ENCODE measurements at regions of chr13 and their contacts with region 1.

Region 1: GRCh38 chr13:32586080-32586900 is at the start of gene PDS5B:
- DNase-seq: peak; percentile 98
- ATAC-seq: peak; percentile 99
- total RNA-seq, gene PDS5B: 25.1 TPM

Region 2: DNA sequence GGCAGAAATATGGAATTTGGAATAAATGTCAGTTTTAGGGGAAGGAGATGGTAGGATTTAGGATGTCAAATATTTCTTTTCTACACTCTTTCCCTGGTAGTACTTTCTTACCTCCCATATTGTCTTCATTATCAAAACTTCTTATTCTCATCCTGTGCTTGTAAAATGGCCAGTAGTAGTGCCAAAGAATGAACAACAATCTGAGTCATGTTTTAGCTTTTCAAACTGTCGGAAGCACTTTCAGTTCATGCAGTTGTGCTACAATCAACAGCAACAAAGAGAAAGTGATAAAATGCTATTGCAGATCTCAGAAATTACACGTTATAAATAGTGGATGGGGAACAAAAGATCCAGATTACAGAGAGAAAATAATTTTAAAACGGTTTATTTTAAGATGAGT is 1040.7 kb before region 1 on chr13:
- intact Hi-C with region 1: no loop called
- DNase-seq: no peak
- ATAC-seq: no peak

Region 3: GRCh38 chr13:32538621-32539246 is 47.6 kb before region 1 on chr13 and contains the start of gene N4BP2L2:
- intact Hi-C with region 1: loop called (anchors 5 kb)
- DNase-seq: peak; percentile 95
- ATAC-seq: peak; percentile 99
- total RNA-seq, gene N4BP2L2: 115 TPM

Region 4: DNA sequence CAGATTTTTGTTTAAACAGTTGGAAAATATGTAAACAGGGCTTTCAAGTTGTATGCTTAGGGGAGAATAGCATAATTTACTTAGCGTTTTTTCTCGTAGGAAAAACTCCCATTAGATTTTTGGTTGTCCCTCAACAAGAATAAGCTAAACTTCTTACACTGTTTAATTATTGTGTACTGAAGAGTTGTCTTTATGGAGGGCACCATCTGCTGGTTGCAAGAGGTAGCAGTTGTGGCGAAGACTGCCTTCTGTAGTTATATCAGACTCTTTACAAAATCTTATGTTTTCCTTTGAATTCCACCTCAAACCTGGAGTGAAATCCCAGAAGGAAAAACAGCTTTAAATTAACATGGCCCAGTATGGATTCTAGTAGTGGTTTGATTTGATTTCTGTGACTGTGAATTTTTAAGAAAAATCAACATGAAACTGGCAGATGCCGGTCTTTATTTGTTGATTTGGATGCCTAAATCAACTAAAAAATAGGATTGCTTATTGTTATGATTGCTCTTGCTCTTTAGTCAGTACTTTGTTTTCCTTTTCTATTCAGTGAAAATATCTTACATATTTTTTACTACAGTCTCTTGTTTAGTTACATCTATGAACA is 53.3 kb after region 1 on chr13:
- intact Hi-C with region 1: loop called (anchors 1 kb)
- DNase-seq: no peak
- ATAC-seq: peak; percentile 57

Region 5: GRCh38 chr13:32902874-32903273 is 316.6 kb after region 1 on chr13:
- intact Hi-C with region 1: loop called (anchors 5 kb)
- DNase-seq: peak; percentile 88
- ATAC-seq: peak; percentile 94

Region 6: DNA sequence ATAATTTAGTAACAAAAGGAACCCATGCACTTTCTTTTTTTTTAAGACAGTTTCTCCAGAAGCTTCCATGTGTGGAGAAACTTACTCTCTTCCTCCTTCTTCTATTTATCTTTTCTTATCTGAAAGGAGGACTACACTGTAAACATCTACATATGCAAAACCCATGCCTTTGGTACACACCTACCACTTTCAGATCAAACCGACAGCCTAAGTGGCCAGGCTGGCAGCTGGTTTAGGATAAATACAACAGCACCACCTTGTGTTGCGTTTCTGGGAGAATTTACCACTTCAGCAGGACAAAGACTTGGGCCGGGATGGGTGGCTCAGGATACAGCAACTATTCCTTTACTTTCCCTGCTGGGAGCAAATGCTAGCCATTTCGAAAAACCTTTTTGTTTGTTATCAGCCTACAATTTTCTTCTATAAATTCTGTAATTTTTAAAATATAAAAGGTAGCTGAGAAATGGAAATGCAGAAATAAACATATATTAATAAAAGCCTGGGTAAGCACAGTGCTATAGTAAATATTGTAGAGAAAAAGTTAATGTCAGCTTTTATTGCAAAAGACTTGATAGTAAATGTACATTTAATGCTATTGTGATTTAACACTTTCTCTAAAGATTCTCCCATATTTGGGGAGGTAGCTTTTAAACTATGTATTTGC is 1137.6 kb after region 1 on chr13:
- intact Hi-C with region 1: loop called (anchors 2 kb)
- DNase-seq: peak; percentile 84
- ATAC-seq: peak; percentile 85

Measured in Right ventricle myocardium inferior (tissue), 1 donor.